Lower lobe of right lung (tissue), 2 donors: ENCODE measurements at regions of chr3 and their contacts with region 1.

Region 1: GRCh38 chr3:153291056-153291685 is 129.1 kb downstream of the RAP2B start:
- DNase-seq: no peak
- ATAC-seq: peak; percentile 78 to 90
- H3K4me3 ChIP-seq: no peak overlapping the region
- H3K27ac ChIP-seq: no peak overlapping the region
- H3K4me1 ChIP-seq: peaks cover 5% of the 10 kb centered on the region
- H3K27me3 ChIP-seq: no peaks in the 10 kb centered on the region
- CTCF ChIP-seq: peak; percentile 58

Region 2: GRCh38 chr3:153043729-153044328 is 247.3 kb before region 1 on chr3:
- intact Hi-C with region 1: loop called (anchors 10 kb)
- DNase-seq: no peak
- ATAC-seq: no peak
- H3K4me3 ChIP-seq: no peak overlapping the region
- H3K27ac ChIP-seq: no peak overlapping the region
- H3K4me1 ChIP-seq: peaks cover 9% of the 10 kb centered on the region
- H3K27me3 ChIP-seq: no peaks in the 10 kb centered on the region
- CTCF ChIP-seq: no peak

Region 3: DNA sequence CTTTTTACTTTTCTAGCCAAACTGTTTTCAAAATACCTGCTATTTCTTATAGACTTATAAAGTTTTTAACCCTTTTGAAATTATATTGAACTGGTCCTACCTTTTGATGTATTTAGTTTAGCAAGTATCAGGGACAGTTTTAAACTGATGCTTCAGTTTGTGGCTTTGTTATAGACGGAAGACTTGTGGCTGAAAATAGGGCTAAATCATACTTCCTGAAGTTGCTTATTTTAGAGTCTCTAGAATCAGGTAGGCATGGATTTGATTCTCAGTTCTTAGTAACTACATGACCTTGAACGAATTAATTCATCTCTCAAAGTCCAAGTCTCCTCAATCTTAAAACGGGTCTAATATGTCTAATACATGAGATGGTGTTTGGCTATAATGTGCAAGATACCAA is 193.7 kb after region 1 on chr3:
- intact Hi-C with region 1: no loop called
- DNase-seq: no peak
- ATAC-seq: no peak
- H3K4me3 ChIP-seq: no peak overlapping the region
- H3K27ac ChIP-seq: no peak overlapping the region
- H3K4me1 ChIP-seq: no peaks in the 10 kb centered on the region
- H3K27me3 ChIP-seq: no peaks in the 10 kb centered on the region
- CTCF ChIP-seq: no peak